ENCODE measurements at regions of chr16 and their contacts with region 1.

Region 1: GRCh38 chr16:67667817-67668494 is 1.3 kb downstream of the C16orf86 start:
- DNase-seq: peak; percentile 87
- H3K4me3 ChIP-seq: peak overlapping the region in 2 of 4 donors; percentile 82 to 91
- H3K27ac ChIP-seq: peak overlapping the region; percentile 86 to 95 (median 88)
- H3K4me1 ChIP-seq: peaks cover 19 to 33% (median 28%) of the 10 kb centered on the region in 4 donors
- H3K27me3 ChIP-seq: no peaks in the 10 kb centered on the region
- CTCF ChIP-seq: peak; percentile 75 to 96 (median 85)
- EP300 ChIP-seq: no peak
- POLR2A ChIP-seq: no peak

Region 2: DNA sequence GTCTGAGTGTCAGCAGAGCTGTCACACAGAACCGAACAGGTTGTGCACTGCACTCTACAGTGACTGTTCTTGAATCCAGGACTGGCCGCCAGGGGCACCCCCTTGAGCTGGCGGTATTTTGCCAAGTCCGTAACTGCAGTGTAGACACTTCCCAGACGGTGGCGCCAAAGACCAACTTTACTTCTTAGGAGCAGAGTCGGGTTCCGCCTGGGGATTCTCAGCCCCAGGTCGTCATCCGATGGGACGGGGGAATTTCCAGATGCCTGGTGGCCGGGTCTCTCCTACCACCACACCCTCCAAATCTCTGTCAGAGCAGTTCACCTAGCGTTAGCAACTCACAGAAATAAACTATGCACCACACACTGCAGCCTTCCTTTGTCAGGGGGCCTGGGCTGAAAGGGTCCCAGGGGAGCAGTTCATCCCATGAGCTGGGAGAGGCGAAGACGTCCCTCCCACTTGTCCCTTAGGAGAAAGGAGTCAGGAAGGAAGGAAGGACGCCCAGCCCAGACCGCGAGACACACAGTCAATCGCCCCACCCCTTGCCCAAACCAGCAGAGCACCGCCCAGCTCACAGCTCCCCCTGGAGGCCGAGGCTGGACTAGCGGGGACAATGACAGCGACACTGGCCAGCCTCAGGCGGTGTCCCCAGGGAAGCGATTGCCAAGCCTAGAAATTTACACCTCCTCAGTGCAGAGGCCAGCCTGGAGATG is 146.7 kb before region 1 on chr16:
- in situ Hi-C with region 1: loop called in 1 of 4 experiments (anchors 10 kb)
- intact Hi-C with region 1: loop called (anchors 5 kb)
- DNase-seq: peak; percentile 99
- H3K4me3 ChIP-seq: peak overlapping the region; percentile 16 to 60 (median 28)
- H3K27ac ChIP-seq: peak overlapping the region; percentile 89 to 97 (median 94)
- H3K4me1 ChIP-seq: peaks cover 4 to 8% (median 6%) of the 10 kb centered on the region in 4 donors
- H3K27me3 ChIP-seq: no peaks in the 10 kb centered on the region
- CTCF ChIP-seq: peak; percentile 72 to 98 (median 84)
- EP300 ChIP-seq: no peak
- POLR2A ChIP-seq: peak; percentile 33

Region 3: DNA sequence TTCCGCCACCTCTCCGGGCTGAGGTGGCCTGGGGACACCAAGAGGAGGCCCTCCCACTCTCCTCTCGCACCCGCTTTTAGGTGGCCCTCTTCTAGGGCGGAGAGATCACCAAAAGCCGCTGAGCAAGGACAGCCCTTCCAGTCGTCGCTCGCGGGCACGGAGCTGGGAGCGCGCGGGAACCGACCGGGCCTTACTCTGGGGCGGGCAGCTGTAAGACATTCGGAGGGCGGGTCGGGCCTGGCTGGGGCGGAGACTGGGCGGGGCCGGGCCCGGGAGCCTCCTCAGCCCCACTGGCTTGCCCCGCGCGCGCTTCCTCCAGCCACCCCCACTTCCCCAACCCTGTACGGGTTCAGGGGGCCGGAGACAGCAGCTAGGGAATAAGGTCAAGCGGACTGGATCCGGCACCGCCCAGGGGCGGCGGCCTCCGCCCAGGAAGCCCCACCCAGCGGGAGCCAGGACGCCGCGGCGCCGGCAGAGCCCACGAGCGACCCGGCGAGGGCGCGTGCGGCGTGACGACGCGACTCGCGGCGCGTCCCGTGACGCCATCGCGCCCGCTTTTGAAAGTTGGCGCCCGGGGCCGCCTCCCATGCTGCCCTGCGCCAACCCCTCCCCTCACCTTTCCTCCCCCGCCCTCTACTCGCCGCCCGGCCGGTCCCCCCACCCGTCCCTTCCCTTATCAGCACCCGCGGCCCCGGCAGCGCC is 106.0 kb before region 1 on chr16:
- in situ Hi-C with region 1: loop called in 2 of 4 experiments (anchors 25 kb)
- intact Hi-C with region 1: loop called (anchors 2 kb)
- DNase-seq: peak; percentile 97
- H3K4me3 ChIP-seq: peak overlapping the region; percentile 49 to 94 (median 70)
- H3K27ac ChIP-seq: peak overlapping the region; percentile 97 to 99 (median 98)
- H3K4me1 ChIP-seq: peaks cover 5 to 34% (median 21%) of the 10 kb centered on the region in 4 donors
- H3K27me3 ChIP-seq: no peaks in the 10 kb centered on the region
- CTCF ChIP-seq: no peak
- EP300 ChIP-seq: no peak
- POLR2A ChIP-seq: peak; percentile 68

Region 4: GRCh38 chr16:67595033-67595355 is 73.0 kb before region 1 on chr16:
- in situ Hi-C with region 1: no loop called
- intact Hi-C with region 1: no loop called
- DNase-seq: no peak
- H3K4me3 ChIP-seq: no peak overlapping the region
- H3K27ac ChIP-seq: no peak overlapping the region
- H3K4me1 ChIP-seq: no peaks in the 10 kb centered on the region
- H3K27me3 ChIP-seq: no peaks in the 10 kb centered on the region
- CTCF ChIP-seq: no peak
- EP300 ChIP-seq: no peak
- POLR2A ChIP-seq: no peak

Region 5: DNA sequence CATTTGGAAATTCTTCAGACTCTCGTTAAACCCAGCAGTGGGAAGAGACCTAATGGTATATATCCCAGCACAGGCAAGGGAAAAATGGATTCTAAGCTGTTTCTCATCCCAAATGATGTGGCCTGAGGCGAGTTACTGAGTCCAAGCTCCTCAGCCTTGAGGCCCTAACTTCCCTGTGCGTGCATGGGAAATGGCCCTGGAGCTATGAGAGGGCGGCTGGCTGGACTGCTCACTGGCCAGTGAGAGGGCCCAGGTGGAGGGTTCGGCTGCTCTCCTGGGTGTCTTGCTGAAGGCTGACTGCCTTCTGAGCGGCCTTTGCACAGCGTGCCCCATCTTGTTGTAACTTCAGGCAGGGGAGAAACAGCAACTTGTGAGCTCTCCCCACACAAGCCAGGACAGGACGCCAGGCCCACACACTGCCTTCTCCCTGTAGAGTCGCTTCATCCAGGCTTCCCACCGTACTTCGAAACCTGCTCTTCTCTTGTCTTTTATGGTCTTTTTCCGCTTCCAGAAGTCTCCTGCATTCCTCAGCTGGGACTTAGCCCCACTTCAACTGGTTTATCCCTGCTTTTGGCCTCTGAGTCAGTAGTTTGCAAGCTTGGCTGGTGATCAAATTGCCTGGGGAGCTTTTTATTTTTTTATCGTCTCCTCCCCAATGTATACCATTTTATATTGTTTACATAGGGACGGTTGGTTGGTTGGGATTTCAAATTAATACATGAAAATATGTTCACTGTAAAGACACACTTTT is 990.5 kb after region 1 on chr16:
- in situ Hi-C with region 1: no loop called
- intact Hi-C with region 1: no loop called
- DNase-seq: no peak
- H3K4me3 ChIP-seq: no peak overlapping the region
- H3K27ac ChIP-seq: no peak overlapping the region
- H3K4me1 ChIP-seq: peaks cover 0 to 8% (median 3%) of the 10 kb centered on the region in 4 donors
- H3K27me3 ChIP-seq: no peaks in the 10 kb centered on the region
- CTCF ChIP-seq: no peak
- EP300 ChIP-seq: no peak
- POLR2A ChIP-seq: no peak